CD4-positive, alpha-beta T cell (primary cell): ENCODE measurements at regions of chrX and their contacts with region 1.

Region 1: DNA sequence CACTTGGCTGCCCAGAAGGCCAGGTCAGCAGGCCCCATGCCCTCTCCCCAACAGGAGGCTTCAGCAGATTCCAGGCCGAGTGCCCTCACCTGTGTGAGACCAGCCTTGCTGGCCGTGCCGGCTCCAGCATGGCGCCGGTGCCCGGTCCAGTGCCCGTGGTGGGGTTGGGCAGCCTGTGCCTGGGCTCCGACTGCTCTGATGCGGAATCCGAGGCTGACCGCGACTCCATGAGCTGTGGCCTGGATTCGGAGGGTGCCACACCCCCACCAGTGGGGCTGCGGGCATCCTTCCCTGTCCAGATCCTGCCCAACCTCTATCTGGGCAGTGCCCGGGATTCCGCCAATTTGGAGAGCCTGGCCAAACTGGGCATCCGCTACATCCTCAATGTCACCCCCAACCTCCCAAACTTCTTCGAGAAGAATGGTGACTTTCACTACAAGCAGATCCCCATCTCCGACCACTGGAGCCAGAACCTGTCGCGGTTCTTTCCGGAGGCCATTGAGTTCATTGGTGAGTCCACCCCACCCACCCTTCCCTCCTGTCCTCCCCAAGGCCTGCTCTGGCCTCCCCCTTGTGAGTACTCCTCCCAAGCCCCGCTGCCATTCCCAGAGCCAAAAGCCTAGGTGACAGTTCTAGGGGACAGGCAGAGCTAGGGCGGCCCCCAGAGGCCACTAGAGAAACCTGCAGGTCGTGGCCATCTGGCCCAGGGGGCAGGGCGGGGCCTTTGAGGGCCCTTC is 2.3 kb downstream of the DUSP9 start:
- DNase-seq: peak in 9 of 14 experiments; percentile 15 to 69 (median 36)
- ATAC-seq: peak; percentile 71
- H3K4me3 ChIP-seq: no peak overlapping the region
- H3K4me3 Mint-ChIP-seq: no peak overlapping the region
- H3K27ac ChIP-seq: no peak overlapping the region
- H3K27ac Mint-ChIP-seq: no peak overlapping the region
- H3K4me1 ChIP-seq: peaks cover 11% of the 10 kb centered on the region
- H3K4me1 Mint-ChIP-seq: no peaks in the 10 kb centered on the region
- H3K27me3 ChIP-seq: peaks cover 27 to 28% of the 10 kb centered on the region in 2 experiments
- H3K27me3 Mint-ChIP-seq: peaks cover 16% of the 10 kb centered on the region
- CTCF ChIP-seq: peak; percentile 44

Region 2: DNA sequence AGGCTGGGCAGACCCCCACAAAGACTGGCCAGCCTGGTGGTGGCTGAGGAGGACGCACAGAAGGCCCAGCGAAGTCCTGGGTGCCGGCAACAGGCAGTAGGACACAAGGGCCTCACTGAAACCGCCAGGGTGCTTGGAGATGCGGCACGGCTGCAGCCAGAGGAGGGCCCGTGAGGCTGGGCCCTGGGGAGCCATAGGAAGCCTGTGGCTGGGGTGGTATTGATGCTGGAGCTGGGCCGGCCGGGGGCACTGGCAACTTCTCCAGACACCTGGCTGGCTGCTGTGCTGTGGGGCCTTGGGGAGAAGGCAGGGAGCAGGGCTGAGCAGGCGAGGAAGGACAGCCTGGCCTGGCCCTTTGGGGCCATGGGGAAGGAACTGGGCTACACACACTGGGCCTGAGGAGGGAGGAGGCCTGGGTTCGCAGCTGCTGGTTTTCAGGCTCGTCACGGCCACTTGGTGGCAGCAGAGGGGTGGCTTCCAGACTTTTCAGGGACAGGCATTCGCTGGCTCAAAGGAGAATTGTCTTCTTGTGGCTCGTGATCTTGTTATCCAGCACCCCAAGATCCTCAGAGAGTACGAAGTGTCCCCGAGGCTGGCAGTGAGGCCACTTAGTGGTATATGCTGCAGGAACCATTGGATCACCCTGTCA is 94.7 kb before region 1 on chrX:
- CTCF ChIA-PET with region 1: interaction called, 7 read pairs
- POLR2A ChIA-PET with region 1: interaction called, 3 read pairs
- intact Hi-C with region 1: loop called in 1 of 2 experiments (anchors 1 kb)
- DNase-seq: peak; percentile 40 to 76 (median 54)
- ATAC-seq: peak; percentile 68
- H3K4me3 ChIP-seq: no peak overlapping the region
- H3K4me3 Mint-ChIP-seq: no peak overlapping the region
- H3K27ac ChIP-seq: no peak overlapping the region
- H3K27ac Mint-ChIP-seq: no peak overlapping the region
- H3K4me1 ChIP-seq: peaks cover 2% of the 10 kb centered on the region
- H3K4me1 Mint-ChIP-seq: no peaks in the 10 kb centered on the region
- H3K27me3 ChIP-seq: peaks cover 0 to 2% of the 10 kb centered on the region in 2 experiments
- H3K27me3 Mint-ChIP-seq: no peaks in the 10 kb centered on the region
- CTCF ChIP-seq: peak; percentile 46

Region 3: DNA sequence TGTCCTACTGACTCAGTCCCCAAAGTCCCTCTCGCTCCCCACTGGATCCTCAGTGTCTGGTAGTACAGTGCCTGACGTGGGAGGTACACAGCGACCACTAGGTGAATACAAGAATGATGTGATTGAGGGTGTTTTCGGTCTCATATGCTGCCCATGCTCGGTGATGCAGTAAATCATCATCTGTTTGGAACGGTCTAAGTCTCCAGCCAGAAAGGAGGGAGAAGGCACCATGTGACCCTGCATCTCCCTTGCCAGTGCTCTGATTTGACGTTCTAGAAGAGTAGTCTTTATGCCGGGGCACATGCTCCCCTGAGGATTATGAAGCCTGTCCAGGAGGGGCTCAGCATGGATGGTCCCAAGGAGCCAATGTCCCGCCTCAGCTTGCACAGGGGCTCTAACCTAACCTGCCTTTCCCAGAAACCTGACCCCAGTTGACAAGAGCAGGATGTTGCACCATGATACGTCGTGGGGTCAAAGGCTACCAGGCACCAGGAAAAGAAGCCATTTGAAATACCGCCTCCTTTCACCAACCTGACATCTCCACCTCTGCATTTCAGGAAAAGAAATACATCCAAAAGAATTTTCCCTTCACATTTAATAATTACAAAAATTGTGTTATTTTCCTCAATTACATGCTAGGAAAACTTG is 100.9 kb after region 1 on chrX:
- CTCF ChIA-PET with region 1: no interaction called
- POLR2A ChIA-PET with region 1: no interaction called
- intact Hi-C with region 1: no loop called
- DNase-seq: no peak
- ATAC-seq: no peak
- H3K4me3 ChIP-seq: no peak overlapping the region
- H3K4me3 Mint-ChIP-seq: no peak overlapping the region
- H3K27ac ChIP-seq: no peak overlapping the region
- H3K27ac Mint-ChIP-seq: no peak overlapping the region
- H3K4me1 ChIP-seq: no peaks in the 10 kb centered on the region
- H3K4me1 Mint-ChIP-seq: no peaks in the 10 kb centered on the region
- H3K27me3 ChIP-seq: no peaks in the 10 kb centered on the region
- H3K27me3 Mint-ChIP-seq: no peaks in the 10 kb centered on the region
- CTCF ChIP-seq: no peak